ENCODE measurements at regions of chr17 and their contacts with region 1.

Region 1: DNA sequence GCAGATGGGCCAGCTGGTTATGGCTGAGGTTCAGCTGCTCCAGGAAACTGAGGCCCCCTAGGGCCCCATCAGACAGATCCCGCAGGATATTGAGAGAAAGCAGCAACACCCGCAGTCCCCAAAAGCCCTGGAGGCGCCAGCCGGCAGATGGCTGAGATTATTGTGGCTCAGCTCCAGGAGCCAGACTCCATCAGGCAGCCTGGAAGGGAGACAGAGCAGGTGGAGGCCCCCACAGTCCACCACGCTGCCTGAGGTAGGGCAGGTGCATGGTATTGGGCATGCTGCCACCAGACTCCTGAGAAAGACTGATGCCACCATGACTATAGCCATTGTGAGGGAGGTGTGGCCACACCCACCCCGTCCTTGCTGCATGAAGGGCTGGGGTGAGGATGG is 9.5 kb upstream of the TMEM101 start:
- DNase-seq: peak; percentile 68
- H3K4me3 ChIP-seq: no peak overlapping the region
- H3K27ac ChIP-seq: peak overlapping the region in 1 of 2 experiments; percentile 92; a peak in 2 of 4 replicates
- H3K4me1 ChIP-seq: peaks cover 0 to 32% of the 10 kb centered on the region in 2 experiments; a peak in 2 of 4 replicates
- H3K27me3 ChIP-seq: no peaks in the 10 kb centered on the region
- CTCF ChIP-seq: no peak
- EP300 ChIP-seq: peak in 1 of 2 experiments; percentile 74; a peak in 2 of 4 replicates
- RAD21 ChIP-seq: no peak

Region 2: GRCh38 chr17:44006598-44007345 is 17.5 kb before region 1 on chr17:
- CTCF ChIA-PET with region 1: interaction called, 11 read pairs
- POLR2A ChIA-PET with region 1: no interaction called
- DNase-seq: peak; percentile 98
- H3K4me3 ChIP-seq: peak overlapping the region; percentile 80 to 90
- H3K27ac ChIP-seq: peak overlapping the region; percentile 57 to 62; a peak in 3 of 4 replicates
- H3K4me1 ChIP-seq: peaks cover 8 to 47% of the 10 kb centered on the region in 2 experiments; a peak in 2 of 4 replicates
- H3K27me3 ChIP-seq: no peaks in the 10 kb centered on the region
- CTCF ChIP-seq: peak; percentile 69
- EP300 ChIP-seq: no peak
- RAD21 ChIP-seq: peak; percentile 63

Measured in SK-N-SH (cell line).